ENCODE measurements at regions of chr6 and their contacts with region 1.

Region 1: GRCh38 chr6:111057074-111057752 is 30.1 kb upstream of the SLC16A10 start:
- DNase-seq: peak; percentile 62
- H3K4me3 Mint-ChIP-seq: no peak overlapping the region
- H3K27ac Mint-ChIP-seq: no peak overlapping the region
- H3K4me1 Mint-ChIP-seq: no peaks in the 10 kb centered on the region
- H3K27me3 Mint-ChIP-seq: peaks cover 40% of the 10 kb centered on the region
- CTCF ChIP-seq: peak; percentile 56

Region 2: GRCh38 chr6:111011360-111012142 is 45.7 kb before region 1 on chr6:
- CTCF ChIA-PET with region 1: interaction called, 15 read pairs
- POLR2A ChIA-PET with region 1: interaction called, 4 read pairs
- intact Hi-C with region 1: no loop called
- DNase-seq: peak; percentile 55
- H3K4me3 Mint-ChIP-seq: no peak overlapping the region
- H3K27ac Mint-ChIP-seq: no peak overlapping the region
- H3K4me1 Mint-ChIP-seq: no peaks in the 10 kb centered on the region
- H3K27me3 Mint-ChIP-seq: no peaks in the 10 kb centered on the region
- CTCF ChIP-seq: peak; percentile 45

Region 3: GRCh38 chr6:111027219-111027618 is 30.0 kb before region 1 on chr6:
- CTCF ChIA-PET with region 1: interaction called, 11 read pairs
- POLR2A ChIA-PET with region 1: no interaction called
- intact Hi-C with region 1: no loop called
- DNase-seq: peak; percentile 9
- H3K4me3 Mint-ChIP-seq: no peak overlapping the region
- H3K27ac Mint-ChIP-seq: no peak overlapping the region
- H3K4me1 Mint-ChIP-seq: no peaks in the 10 kb centered on the region
- H3K27me3 Mint-ChIP-seq: no peaks in the 10 kb centered on the region
- CTCF ChIP-seq: no peak

Region 4: DNA sequence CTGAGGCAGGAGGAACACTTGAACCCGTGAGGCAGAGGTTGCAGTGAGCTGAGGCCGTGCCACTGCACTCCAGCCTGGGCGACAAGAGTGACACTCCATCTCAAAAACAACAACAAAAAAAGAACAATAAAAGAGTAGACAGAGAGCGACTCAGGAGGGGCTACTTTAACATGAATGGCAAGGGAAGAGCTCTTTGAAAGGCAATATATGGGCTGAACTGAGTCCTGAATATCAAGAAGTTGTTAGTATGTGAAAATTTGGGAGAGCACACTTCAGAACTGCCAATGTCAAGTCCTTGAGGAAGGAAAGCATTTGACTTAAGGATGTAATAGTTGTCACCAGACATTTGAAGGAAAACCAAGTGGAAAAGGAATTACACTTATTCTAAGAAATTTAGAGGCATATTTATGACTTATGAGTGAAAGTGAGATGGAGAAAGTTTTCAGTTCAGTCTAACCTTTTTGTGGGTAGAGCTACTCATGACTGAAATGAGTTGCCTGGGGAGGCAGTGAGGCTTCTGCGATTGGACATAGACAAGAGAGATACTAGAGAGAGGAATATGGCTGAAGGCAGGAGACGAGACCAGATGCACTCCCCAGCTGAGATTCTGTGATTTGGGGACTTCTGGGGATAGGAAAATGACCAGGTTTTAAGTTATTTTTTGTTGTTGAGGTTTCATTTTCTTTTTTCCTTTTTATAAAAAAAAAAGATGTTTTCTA is 18.5 kb before region 1 on chr6:
- CTCF ChIA-PET with region 1: interaction called, 12 read pairs
- POLR2A ChIA-PET with region 1: no interaction called
- intact Hi-C with region 1: no loop called
- DNase-seq: no peak
- H3K4me3 Mint-ChIP-seq: no peak overlapping the region
- H3K27ac Mint-ChIP-seq: no peak overlapping the region
- H3K4me1 Mint-ChIP-seq: peaks cover 5% of the 10 kb centered on the region
- H3K27me3 Mint-ChIP-seq: no peaks in the 10 kb centered on the region
- CTCF ChIP-seq: no peak

Region 5: DNA sequence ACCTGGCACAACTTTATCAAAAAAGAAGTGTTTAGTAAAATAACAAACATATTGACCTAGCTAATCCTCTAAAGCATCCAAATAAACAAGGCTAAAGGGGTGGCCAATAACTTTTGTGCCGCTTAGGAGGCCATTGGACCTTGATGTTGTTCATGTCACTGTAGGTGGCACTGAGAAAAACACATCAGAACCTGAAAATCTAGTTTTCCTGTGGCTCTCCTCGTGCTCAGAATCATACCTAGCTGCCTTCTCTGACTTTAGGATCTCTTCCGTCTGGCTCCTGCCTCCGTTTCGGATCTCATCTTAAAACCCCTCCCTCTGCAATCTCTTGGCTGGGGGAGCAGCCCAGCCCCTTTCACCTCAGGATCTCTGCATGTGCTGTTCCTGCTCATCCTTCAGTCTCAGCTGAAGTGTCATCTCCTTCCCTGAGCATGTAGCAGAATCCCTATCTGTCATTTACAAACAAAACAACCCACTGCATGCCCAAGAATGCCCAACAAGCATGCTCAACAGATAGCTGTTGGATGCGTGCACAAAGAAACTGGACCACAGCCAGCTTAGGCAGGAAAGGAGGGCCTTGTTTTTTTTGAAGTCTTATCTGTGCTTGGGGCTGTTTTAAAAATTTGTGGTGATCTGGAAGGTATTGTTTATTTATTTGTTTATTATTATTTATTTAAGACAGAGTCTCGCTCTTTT is 11.4 kb after region 1 on chr6:
- CTCF ChIA-PET with region 1: interaction called, 10 read pairs
- POLR2A ChIA-PET with region 1: interaction called, 3 read pairs
- intact Hi-C with region 1: no loop called
- DNase-seq: no peak
- H3K4me3 Mint-ChIP-seq: no peak overlapping the region
- H3K27ac Mint-ChIP-seq: no peak overlapping the region
- H3K4me1 Mint-ChIP-seq: no peaks in the 10 kb centered on the region
- H3K27me3 Mint-ChIP-seq: peaks cover 63% of the 10 kb centered on the region
- CTCF ChIP-seq: no peak

Region 6: DNA sequence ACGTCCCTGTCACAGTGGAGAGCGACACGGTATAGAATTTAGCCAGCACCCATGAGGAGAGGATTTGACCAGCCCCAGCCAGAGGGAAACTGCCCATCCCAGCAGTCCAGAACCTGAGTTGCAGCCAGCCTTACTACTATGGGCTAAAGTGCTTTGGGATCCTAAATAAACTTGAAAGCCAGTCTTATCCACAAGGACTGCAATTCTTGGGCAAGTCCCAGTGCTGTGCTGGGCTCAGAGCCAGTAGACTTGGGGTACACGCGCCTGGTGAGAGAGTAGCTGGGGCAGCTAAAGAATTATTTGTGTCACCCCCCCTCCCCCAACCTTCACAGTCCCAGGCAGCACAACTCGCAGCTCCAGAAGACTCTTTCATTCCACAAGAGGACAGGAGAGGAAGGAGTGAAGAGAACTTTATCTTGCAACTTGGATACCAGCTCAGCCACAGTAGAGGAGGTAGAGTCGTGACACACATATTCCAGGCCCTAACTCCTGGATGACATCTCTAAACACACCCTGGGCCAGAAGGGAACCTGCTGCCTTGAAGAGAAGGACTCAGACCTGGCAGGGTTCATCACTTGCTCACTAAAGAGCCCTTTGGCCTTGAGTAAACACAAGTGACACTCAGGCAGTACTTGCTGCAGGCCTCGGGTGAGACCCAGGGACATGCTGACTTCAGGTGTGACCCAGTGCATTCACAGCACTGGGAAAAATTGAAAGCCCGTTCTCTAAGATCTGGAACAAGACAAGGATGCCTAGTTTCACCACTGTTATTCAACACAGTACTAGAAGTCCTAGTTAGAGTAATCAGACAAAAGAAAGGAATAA is 325.5 kb after region 1 on chr6:
- CTCF ChIA-PET with region 1: no interaction called
- POLR2A ChIA-PET with region 1: no interaction called
- intact Hi-C with region 1: no loop called
- DNase-seq: no peak
- H3K4me3 Mint-ChIP-seq: no peak overlapping the region
- H3K27ac Mint-ChIP-seq: no peak overlapping the region
- H3K4me1 Mint-ChIP-seq: no peaks in the 10 kb centered on the region
- H3K27me3 Mint-ChIP-seq: no peaks in the 10 kb centered on the region
- CTCF ChIP-seq: no peak